Activated CD4-positive, alpha-beta T cell treated with anti-CD3 and anti-CD28 coated beads for 36 hours (primary cell): ENCODE measurements at regions of chr2 and their contacts with region 1.

Region 1: DNA sequence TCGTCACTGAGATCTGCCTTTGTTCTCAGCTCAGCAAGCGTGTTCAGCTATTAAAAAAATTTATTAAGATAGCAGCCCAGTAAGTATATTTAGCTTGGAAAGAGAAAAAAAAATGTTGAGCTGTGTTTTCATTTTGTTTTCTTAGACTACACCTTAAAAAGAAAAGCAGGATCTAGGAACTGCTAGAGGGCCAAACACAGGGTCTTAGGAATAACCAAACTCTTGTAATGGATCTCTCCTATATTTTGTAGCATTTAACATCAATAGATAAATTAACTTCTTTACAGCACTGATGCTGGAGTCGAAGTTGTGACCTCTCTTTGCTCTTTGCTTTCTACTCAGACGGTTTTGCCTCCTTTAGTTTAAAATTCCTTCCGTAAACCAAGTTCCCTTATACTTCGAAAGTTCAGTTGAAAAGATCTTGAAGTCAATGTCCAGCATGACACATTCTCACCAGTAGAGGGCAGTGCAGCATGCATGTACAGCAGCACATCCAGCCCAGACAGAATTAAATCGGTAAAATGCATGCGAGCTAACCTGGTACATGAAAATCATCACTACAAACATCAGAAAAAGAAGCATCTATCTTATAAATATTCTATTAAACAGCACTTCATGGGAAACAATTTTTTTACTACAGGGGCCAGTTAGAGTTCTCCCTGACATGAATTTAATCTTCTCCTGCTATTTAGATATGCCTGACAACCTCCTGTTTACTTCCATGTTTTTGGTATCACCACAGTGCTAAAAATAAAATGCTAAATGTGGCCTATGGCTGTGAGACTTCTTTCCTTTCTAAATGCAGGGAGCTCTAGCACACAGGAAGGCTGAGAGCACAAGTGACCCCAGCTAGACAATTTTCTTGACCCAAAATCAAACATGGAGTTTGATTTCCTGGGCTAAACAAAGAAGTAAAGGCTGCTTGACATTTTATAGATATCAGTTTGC is 48.2 kb upstream of the MAP3K20 start:
- DNase-seq: peak; percentile 87
- ATAC-seq: peak; percentile 63
- H3K4me3 Mint-ChIP-seq: no peak overlapping the region
- H3K27ac Mint-ChIP-seq: no peak overlapping the region
- H3K4me1 Mint-ChIP-seq: peaks cover 4% of the 10 kb centered on the region
- H3K27me3 Mint-ChIP-seq: peaks cover 6% of the 10 kb centered on the region

Region 2: DNA sequence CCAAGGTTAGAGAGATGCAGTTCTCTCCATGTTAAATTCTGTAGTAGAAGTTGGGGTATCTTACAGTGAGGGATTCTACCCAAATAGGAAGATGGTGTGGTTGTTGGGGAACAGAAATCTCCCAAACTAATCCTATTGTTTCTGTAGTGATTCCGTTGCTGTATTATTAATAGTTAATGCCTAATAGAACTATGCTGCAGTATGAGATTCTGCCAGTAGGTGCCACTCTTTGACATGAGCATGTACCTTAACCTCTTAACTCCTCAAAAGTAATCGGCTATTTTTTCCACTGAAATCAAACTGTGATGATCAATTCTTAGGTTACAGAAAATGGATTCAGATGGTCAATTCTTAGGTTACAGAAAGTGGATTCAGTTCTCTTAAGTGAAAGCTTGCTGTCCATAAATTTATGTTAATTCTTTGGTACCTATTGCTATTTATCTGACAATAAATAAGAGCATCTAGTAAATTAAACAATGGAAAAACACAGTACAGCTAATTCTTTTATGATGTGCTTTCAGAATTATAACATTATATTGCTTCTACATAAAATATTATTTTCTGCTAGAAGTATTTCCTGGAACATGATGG is 826.9 kb before region 1 on chr2:
- CTCF ChIA-PET with region 1: no interaction called
- POLR2A ChIA-PET with region 1: no interaction called
- intact Hi-C with region 1: no loop called
- DNase-seq: peak; percentile 52
- ATAC-seq: no peak
- H3K4me3 Mint-ChIP-seq: no peak overlapping the region
- H3K27ac Mint-ChIP-seq: no peak overlapping the region
- H3K4me1 Mint-ChIP-seq: peaks cover 13% of the 10 kb centered on the region
- H3K27me3 Mint-ChIP-seq: peaks cover 33% of the 10 kb centered on the region

Region 3: GRCh38 chr2:172821370-172822347 is 205.8 kb before region 1 on chr2:
- CTCF ChIA-PET with region 1: no interaction called
- POLR2A ChIA-PET with region 1: no interaction called
- intact Hi-C with region 1: no loop called
- DNase-seq: no peak
- ATAC-seq: no peak
- H3K4me3 Mint-ChIP-seq: no peak overlapping the region
- H3K27ac Mint-ChIP-seq: no peak overlapping the region
- H3K4me1 Mint-ChIP-seq: no peaks in the 10 kb centered on the region
- H3K27me3 Mint-ChIP-seq: peaks cover under 1% of the 10 kb centered on the region

Region 4: GRCh38 chr2:172864182-172864581 is 163.3 kb before region 1 on chr2:
- CTCF ChIA-PET with region 1: interaction called, 3 read pairs
- POLR2A ChIA-PET with region 1: no interaction called
- intact Hi-C with region 1: loop called (anchors 5 to 10 kb)
- DNase-seq: peak; percentile 79
- ATAC-seq: peak; percentile 36
- H3K4me3 Mint-ChIP-seq: no peak overlapping the region
- H3K27ac Mint-ChIP-seq: no peak overlapping the region
- H3K4me1 Mint-ChIP-seq: no peaks in the 10 kb centered on the region
- H3K27me3 Mint-ChIP-seq: peaks cover 5% of the 10 kb centered on the region

Region 5: GRCh38 chr2:173043476-173043875 is 16.0 kb after region 1 on chr2:
- CTCF ChIA-PET with region 1: interaction called, 16 read pairs
- POLR2A ChIA-PET with region 1: no interaction called
- intact Hi-C with region 1: no loop called
- DNase-seq: no peak
- ATAC-seq: no peak
- H3K4me3 Mint-ChIP-seq: no peak overlapping the region
- H3K27ac Mint-ChIP-seq: no peak overlapping the region
- H3K4me1 Mint-ChIP-seq: peaks cover 2% of the 10 kb centered on the region
- H3K27me3 Mint-ChIP-seq: peaks cover 2% of the 10 kb centered on the region

Region 6: GRCh38 chr2:173059927-173060565 is 32.6 kb after region 1 on chr2:
- CTCF ChIA-PET with region 1: interaction called, 10 read pairs
- POLR2A ChIA-PET with region 1: no interaction called
- intact Hi-C with region 1: no loop called
- DNase-seq: no peak
- ATAC-seq: no peak
- H3K4me3 Mint-ChIP-seq: no peak overlapping the region
- H3K27ac Mint-ChIP-seq: no peak overlapping the region
- H3K4me1 Mint-ChIP-seq: no peaks in the 10 kb centered on the region
- H3K27me3 Mint-ChIP-seq: peaks cover 19% of the 10 kb centered on the region

Region 7: DNA sequence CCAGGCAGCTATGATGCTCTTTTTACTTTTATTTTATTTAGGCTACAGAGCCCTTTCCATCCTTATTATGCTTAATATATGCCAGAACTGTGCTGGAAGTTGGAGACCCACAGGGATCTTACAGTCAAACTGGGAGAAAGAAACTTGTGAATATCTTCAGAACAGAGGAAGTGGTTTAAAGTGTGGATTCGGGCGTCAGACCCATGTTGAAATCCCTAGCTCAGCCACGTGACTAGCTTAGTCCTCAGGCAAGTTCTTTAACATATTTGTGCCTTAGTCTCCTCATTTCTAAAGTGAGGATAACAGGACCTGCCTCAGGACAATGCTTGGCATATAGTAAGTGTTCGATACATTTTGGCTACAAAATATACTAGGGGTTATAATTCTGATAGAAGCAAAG is 107.2 kb after region 1 on chr2:
- CTCF ChIA-PET with region 1: interaction called, 15 read pairs
- POLR2A ChIA-PET with region 1: no interaction called
- intact Hi-C with region 1: no loop called
- DNase-seq: peak; percentile 16
- ATAC-seq: no peak
- H3K4me3 Mint-ChIP-seq: no peak overlapping the region
- H3K27ac Mint-ChIP-seq: no peak overlapping the region
- H3K4me1 Mint-ChIP-seq: peaks cover 51% of the 10 kb centered on the region
- H3K27me3 Mint-ChIP-seq: peaks cover 38% of the 10 kb centered on the region

Region 8: GRCh38 chr2:173402405-173402974 is 375.0 kb after region 1 on chr2:
- CTCF ChIA-PET with region 1: interaction called, 4 read pairs
- POLR2A ChIA-PET with region 1: no interaction called
- intact Hi-C with region 1: loop called in 1 of 2 experiments (anchors 10 kb)
- DNase-seq: peak; percentile 85
- ATAC-seq: peak; percentile 96
- H3K4me3 Mint-ChIP-seq: no peak overlapping the region
- H3K27ac Mint-ChIP-seq: no peak overlapping the region
- H3K4me1 Mint-ChIP-seq: peaks cover 5% of the 10 kb centered on the region
- H3K27me3 Mint-ChIP-seq: peaks cover 43% of the 10 kb centered on the region